ENCODE measurements at regions of chr9 and their contacts with region 1.

Region 1: DNA sequence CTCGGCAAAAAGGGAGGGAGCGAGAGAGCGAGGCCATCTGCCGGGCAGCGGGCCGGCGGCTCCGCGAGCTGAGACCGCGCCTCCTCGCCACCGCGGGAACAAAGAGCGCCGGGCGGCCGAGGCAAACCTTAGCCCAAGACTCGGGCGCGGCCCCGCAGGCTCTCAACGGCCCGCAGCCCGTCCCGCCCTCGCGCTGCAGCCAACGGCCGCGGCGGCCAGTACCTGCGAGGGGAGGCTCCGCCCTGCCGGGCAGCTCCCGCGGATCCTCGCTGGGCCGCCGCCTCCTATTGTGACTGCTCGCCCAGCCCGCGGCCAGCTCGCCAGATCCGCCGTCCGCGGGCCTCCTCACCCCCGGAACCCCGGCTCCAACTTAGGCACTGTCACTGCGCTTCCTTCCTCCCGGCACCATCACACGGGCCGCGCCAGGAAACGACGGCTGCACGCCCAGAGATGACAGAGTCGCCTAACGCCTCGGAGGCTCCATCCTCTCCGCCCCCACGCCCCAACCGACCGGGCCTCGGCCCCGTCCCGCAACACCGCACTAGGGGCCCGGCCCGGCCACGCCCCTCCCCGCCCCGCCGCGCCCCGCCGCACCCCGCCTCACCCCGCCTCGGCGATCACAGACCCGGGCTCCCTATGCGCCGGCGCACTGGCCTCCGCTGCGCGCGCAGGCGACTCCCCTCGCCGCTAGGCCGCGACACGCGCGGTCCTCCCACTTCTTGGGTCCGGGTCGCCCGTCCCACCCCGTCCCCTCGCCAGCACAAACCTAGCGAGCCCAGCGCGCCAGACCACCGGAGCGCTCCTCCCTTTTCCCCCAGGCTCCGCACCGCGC is 479 bp upstream of the RNF38 start:
- DNase-seq: peak; percentile 96
- H3K4me3 Mint-ChIP-seq: peak overlapping the region; percentile 93
- H3K27ac Mint-ChIP-seq: peak overlapping the region; percentile 98
- H3K4me1 Mint-ChIP-seq: peaks cover 32% of the 10 kb centered on the region
- H3K27me3 Mint-ChIP-seq: no peaks in the 10 kb centered on the region

Region 2: GRCh38 chr9:36136272-36136893 is 264.2 kb before region 1 on chr9 and contains the start of gene GLIPR2:
- intact Hi-C with region 1: loop called (anchors 5 kb)
- DNase-seq: peak; percentile 95
- H3K4me3 Mint-ChIP-seq: peak within 1 kb of the TSS; percentile 88
- H3K27ac Mint-ChIP-seq: peak within 1 kb of the TSS; percentile 77
- H3K4me1 Mint-ChIP-seq: peaks cover 46% of the 10 kb centered on the region
- H3K27me3 Mint-ChIP-seq: peaks cover 19% of the 10 kb centered on the region
- total RNA-seq, gene GLIPR2: 25.5 and 25.7 TPM in 2 replicates

Region 3: GRCh38 chr9:36245906-36246305 is 154.6 kb before region 1 on chr9:
- intact Hi-C with region 1: no loop called
- DNase-seq: no peak
- H3K4me3 Mint-ChIP-seq: no peak overlapping the region
- H3K27ac Mint-ChIP-seq: no peak overlapping the region
- H3K4me1 Mint-ChIP-seq: peaks cover 7% of the 10 kb centered on the region
- H3K27me3 Mint-ChIP-seq: no peaks in the 10 kb centered on the region

Region 4: GRCh38 chr9:36258208-36258988 is 142.2 kb before region 1 on chr9 and contains the start of gene GNE:
- intact Hi-C with region 1: loop called (anchors 1 kb)
- DNase-seq: peak; percentile 100
- H3K4me3 Mint-ChIP-seq: peak within 1 kb of the TSS; percentile 93
- H3K27ac Mint-ChIP-seq: peak within 1 kb of the TSS; percentile 94
- H3K4me1 Mint-ChIP-seq: peaks cover 10% of the 10 kb centered on the region
- H3K27me3 Mint-ChIP-seq: peaks cover 2% of the 10 kb centered on the region
- total RNA-seq, gene GNE: 22.2 and 23.3 TPM in 2 replicates

Region 5: GRCh38 chr9:36341936-36342577 is 58.5 kb before region 1 on chr9:
- intact Hi-C with region 1: loop called (anchors 5 kb)
- DNase-seq: no peak
- H3K4me3 Mint-ChIP-seq: no peak overlapping the region
- H3K27ac Mint-ChIP-seq: peak overlapping the region; percentile 77
- H3K4me1 Mint-ChIP-seq: peaks cover 10% of the 10 kb centered on the region
- H3K27me3 Mint-ChIP-seq: no peaks in the 10 kb centered on the region

Region 6: DNA sequence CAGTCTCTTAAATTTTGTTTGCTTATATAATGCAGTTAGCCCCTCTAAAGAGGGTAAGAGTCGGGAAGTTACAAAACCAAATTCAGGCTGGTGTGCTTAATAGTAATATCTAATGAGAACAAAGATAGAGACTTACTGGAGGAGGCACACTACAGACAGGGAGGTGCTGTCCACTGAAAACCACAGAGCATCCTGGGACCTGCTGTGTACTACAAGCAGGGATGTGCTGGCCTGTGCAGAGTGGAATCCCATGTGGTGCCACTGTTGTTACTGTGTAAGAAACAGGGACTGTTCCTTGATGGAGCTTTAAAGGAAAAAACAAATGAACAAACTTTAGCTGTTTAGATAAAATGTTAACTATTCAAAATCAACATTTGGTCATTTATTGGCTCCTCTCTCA is 42.9 kb before region 1 on chr9:
- intact Hi-C with region 1: no loop called
- DNase-seq: no peak
- H3K4me3 Mint-ChIP-seq: no peak overlapping the region
- H3K27ac Mint-ChIP-seq: no peak overlapping the region
- H3K4me1 Mint-ChIP-seq: peaks cover 5% of the 10 kb centered on the region
- H3K27me3 Mint-ChIP-seq: no peaks in the 10 kb centered on the region

Region 7: GRCh38 chr9:36457836-36458429 is 57.4 kb after region 1 on chr9:
- intact Hi-C with region 1: loop called (anchors 2 kb)
- DNase-seq: no peak
- H3K4me3 Mint-ChIP-seq: peak overlapping the region; percentile 78
- H3K27ac Mint-ChIP-seq: peak overlapping the region; percentile 86
- H3K4me1 Mint-ChIP-seq: peaks cover 46% of the 10 kb centered on the region
- H3K27me3 Mint-ChIP-seq: no peaks in the 10 kb centered on the region

Region 8: DNA sequence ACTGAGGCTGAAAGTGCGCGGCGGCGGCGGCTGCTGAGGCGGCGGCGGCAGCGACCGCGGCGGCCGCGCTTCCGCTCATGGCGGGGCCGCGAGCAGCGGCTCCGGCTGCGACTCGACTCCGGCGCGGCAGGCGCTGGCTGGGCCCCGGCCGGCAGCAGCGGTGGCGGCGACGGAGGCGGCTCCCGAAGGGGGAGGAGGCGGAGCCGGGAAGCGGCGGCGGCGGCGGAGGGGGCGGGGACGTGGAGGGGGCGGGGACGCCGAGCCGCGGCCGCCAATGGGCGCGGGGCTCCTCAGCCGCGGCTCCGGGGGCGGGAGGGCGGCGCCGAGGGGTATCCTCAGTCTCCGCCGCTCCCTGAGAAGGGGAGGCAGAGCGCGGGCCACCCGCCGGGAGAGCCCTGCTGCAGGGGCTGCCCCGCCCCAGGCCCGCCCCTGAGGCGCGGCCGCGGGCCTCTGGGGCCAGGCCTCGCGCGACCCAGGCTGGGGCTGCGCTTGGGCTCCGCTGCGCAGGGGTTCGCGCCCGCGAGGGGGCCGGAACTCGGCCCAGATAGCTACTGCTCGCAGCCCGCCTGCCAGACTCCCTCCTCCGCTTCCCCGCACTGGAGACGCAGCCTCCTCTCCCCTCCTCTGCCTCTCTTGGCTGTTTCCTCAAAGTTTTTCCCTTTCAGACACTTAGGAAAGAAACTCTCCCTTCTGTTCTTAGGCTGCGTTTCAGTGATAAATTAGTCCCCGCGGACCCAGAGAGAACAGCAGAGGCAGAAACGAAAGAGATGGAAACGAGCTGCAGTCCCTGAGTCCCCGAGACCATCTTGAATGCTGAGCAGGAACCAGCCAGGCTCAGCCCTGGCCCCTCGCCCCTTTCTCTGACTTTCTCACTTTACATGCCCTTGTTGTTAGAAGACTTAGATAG is 87.2 kb after region 1 on chr9:
- intact Hi-C with region 1: loop called (anchors 1 kb)
- DNase-seq: peak; percentile 97
- H3K4me3 Mint-ChIP-seq: peak overlapping the region; percentile 89
- H3K27ac Mint-ChIP-seq: peak overlapping the region; percentile 98
- H3K4me1 Mint-ChIP-seq: peaks cover 44% of the 10 kb centered on the region
- H3K27me3 Mint-ChIP-seq: no peaks in the 10 kb centered on the region

Region 9: DNA sequence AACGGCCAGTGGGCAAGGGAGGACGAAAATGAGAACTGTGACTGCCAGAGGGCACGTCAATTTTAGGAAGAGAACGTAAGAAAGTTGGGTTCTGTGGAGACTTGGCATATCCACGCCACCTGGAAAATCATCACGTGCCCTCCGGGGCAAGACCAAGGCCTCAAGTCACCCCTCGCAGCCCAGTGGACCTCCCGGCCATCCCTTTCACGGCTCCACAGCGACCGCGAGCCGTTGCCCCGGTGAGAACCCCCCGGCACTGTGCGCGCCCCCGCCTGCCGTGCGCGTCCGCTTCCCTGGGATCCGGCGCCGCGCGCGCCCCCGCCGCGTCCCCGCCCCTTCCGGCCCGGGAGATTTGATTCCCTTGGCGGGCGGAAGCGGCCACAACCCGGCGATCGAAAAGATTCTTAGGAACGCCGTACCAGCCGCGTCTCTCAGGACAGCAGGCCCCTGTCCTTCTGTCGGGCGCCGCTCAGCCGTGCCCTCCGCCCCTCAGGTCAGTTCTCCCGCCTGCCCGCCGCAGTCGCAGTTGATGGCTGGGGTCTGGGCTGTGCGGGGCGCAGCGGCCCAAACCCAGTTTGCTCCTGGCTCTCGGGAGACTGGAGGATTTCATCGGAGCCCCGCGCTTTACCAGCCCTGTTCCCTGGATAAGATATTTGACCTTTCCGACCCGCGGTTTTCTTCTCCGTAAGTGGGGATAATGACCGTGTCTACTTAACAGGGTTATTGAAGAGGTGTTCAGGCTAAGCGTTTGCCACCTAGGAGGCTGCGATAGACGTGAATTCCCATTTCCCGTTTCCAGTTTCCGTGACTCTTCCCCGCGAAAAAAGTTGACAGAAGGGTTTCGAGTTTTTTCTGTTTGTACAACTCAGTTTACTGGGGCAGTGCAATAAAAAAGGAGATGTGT is 172.2 kb after region 1 on chr9 and contains the start of gene MELK:
- intact Hi-C with region 1: loop called (anchors 2 kb)
- DNase-seq: peak; percentile 97
- H3K4me3 Mint-ChIP-seq: peak within 1 kb of the TSS; percentile 97
- H3K27ac Mint-ChIP-seq: peak within 1 kb of the TSS; percentile 89
- H3K4me1 Mint-ChIP-seq: peaks cover 31% of the 10 kb centered on the region
- H3K27me3 Mint-ChIP-seq: peaks cover 7% of the 10 kb centered on the region
- total RNA-seq, gene MELK: 54.2 and 57.0 TPM in 2 replicates

Measured in activated CD4-positive, alpha-beta T cell treated with anti-CD3 and anti-CD28 coated beads, Interleukin-2, amount 10 ng/mL, durations not matched to agents 24 days and 14 days (primary cell).